Activated CD4-positive, alpha-beta memory T cell treated with anti-CD3 and anti-CD28 coated beads for 36 hours (primary cell): ENCODE measurements at regions of chr1 and their contacts with region 1.

Region 1: GRCh38 chr1:204363335-204364124 is 3.8 kb upstream of the PLEKHA6 start:
- DNase-seq: peak; percentile 88
- H3K4me3 Mint-ChIP-seq: peak overlapping the region; percentile 30
- H3K27ac Mint-ChIP-seq: peak overlapping the region; percentile 59
- H3K4me1 Mint-ChIP-seq: peaks cover 26% of the 10 kb centered on the region
- H3K27me3 Mint-ChIP-seq: peaks cover 9% of the 10 kb centered on the region

Region 2: DNA sequence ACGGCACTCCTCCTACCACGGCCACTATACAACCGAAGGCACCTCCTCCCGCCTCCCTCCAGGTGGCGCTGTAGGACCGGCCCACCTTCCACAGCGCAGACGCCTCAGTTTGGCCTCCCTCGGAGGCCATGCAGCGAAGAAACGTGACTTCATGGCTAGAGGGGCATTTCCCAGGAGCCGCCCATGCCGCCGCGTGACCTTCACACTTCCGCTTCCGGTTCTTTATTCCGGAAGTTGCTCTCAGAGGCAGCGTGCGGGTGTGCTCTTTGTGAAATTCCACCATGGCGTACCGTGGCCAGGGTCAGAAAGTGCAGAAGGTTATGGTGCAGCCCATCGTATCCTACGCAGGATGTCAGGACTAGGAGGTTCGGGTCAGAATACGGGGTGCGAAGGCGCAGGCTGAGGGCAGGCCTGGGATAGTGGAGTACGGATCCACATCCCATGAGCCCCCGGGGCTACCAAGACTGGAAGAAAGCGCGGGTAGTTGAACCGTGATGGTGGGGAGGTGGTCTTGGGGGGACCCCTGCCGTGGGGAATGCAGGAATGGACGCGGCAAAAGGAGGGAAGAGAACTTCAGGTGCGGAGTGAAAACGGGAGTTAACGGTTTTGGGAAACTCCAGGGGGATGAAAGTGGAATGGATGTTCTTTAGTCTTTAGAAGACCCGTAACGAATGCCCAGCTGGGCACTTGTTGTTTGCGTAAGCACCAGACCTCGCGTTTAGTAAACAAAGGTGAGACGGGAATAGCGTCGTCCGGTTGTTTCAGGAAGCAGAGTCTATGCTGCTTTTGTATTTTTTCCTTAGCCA is 501.9 kb before region 1 on chr1 and contains the start of gene SNRPE:
- CTCF ChIA-PET with region 1: no interaction called
- POLR2A ChIA-PET with region 1: no interaction called
- intact Hi-C with region 1: loop called (anchors 1 kb)
- DNase-seq: peak; percentile 98
- H3K4me3 Mint-ChIP-seq: peak within 1 kb of the TSS; percentile 93
- H3K27ac Mint-ChIP-seq: peak within 1 kb of the TSS; percentile 90
- H3K4me1 Mint-ChIP-seq: peaks cover 10% of the 10 kb centered on the region
- H3K27me3 Mint-ChIP-seq: no peaks in the 10 kb centered on the region
- total RNA-seq, gene SNRPE: 327 to 339 TPM

Region 3: GRCh38 chr1:204136814-204137213 is 226.7 kb before region 1 on chr1:
- CTCF ChIA-PET with region 1: no interaction called
- POLR2A ChIA-PET with region 1: no interaction called
- intact Hi-C with region 1: no loop called
- DNase-seq: no peak
- H3K4me3 Mint-ChIP-seq: no peak overlapping the region
- H3K27ac Mint-ChIP-seq: no peak overlapping the region
- H3K4me1 Mint-ChIP-seq: no peaks in the 10 kb centered on the region
- H3K27me3 Mint-ChIP-seq: no peaks in the 10 kb centered on the region

Region 4: GRCh38 chr1:204190212-204191211 is 173.0 kb before region 1 on chr1:
- CTCF ChIA-PET with region 1: interaction called, 13 read pairs
- POLR2A ChIA-PET with region 1: no interaction called
- intact Hi-C with region 1: no loop called
- DNase-seq: peak; percentile 36
- H3K4me3 Mint-ChIP-seq: no peak overlapping the region
- H3K27ac Mint-ChIP-seq: no peak overlapping the region
- H3K4me1 Mint-ChIP-seq: peaks cover 13% of the 10 kb centered on the region
- H3K27me3 Mint-ChIP-seq: peaks cover 44% of the 10 kb centered on the region

Region 5: GRCh38 chr1:204213668-204214662 is 149.6 kb before region 1 on chr1 and contains the start of gene GOLT1A:
- CTCF ChIA-PET with region 1: interaction called, 20 read pairs
- POLR2A ChIA-PET with region 1: no interaction called
- intact Hi-C with region 1: no loop called
- DNase-seq: peak; percentile 68
- H3K4me3 Mint-ChIP-seq: peak within 1 kb of the TSS; percentile 40
- H3K27ac Mint-ChIP-seq: no peak within 1 kb of the TSS
- H3K4me1 Mint-ChIP-seq: peaks cover 3% of the 10 kb centered on the region
- H3K27me3 Mint-ChIP-seq: peaks cover 4% of the 10 kb centered on the region
- total RNA-seq, gene GOLT1A: 0.27 TPM in 1 of 2 experiments, not detected in the other

Region 6: GRCh38 chr1:204304067-204304466 is 59.5 kb before region 1 on chr1:
- CTCF ChIA-PET with region 1: interaction called, 7 read pairs
- POLR2A ChIA-PET with region 1: no interaction called
- intact Hi-C with region 1: loop called (anchors 5 kb)
- DNase-seq: no peak
- H3K4me3 Mint-ChIP-seq: no peak overlapping the region
- H3K27ac Mint-ChIP-seq: no peak overlapping the region
- H3K4me1 Mint-ChIP-seq: no peaks in the 10 kb centered on the region
- H3K27me3 Mint-ChIP-seq: peaks cover 10% of the 10 kb centered on the region

Region 7: DNA sequence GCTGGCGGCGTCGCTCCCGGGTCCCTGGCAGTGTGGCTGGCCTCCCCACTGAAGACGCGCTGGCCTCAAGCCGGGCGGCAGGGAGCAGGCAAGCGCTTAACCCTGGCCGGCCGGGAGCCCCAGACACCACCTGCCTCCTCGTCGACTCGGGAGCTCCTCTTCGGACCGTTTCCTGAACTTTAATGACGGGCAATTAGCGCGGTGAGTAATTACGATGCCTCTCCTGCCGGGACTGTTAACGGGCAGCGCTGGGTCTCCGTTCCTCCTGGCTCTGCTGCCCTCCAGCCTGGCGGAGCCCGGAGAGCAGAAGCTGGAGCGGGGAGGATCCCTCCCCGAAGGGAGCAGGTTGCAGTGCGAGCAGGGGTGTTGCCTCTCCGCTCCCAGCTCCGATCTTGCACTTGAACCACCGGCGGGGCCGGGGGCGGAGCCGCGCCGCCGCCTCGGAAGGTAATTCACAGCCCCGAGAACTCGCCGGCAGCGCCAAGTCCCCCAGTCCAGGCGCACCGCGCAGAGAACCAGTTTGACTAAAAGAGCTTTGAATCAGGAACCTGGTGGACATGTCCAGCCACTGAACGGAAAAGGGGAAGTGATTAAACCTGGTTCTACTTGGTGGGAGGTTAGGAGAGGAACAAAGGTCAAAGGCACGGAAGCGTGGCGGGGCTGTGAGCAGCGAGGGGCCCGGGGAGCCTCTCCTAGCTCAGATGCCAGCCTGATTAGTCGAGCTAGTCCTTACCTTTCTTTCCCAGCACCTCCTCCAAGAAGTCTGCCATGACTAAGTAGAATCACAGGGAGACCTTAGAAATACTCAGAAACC is 14.5 kb after region 1 on chr1:
- CTCF ChIA-PET with region 1: interaction called, 16 read pairs
- POLR2A ChIA-PET with region 1: no interaction called
- intact Hi-C with region 1: loop called (anchors 1 kb)
- DNase-seq: peak; percentile 58
- H3K4me3 Mint-ChIP-seq: peak overlapping the region; percentile 79
- H3K27ac Mint-ChIP-seq: no peak overlapping the region
- H3K4me1 Mint-ChIP-seq: peaks cover 13% of the 10 kb centered on the region
- H3K27me3 Mint-ChIP-seq: peaks cover 16% of the 10 kb centered on the region

Region 8: DNA sequence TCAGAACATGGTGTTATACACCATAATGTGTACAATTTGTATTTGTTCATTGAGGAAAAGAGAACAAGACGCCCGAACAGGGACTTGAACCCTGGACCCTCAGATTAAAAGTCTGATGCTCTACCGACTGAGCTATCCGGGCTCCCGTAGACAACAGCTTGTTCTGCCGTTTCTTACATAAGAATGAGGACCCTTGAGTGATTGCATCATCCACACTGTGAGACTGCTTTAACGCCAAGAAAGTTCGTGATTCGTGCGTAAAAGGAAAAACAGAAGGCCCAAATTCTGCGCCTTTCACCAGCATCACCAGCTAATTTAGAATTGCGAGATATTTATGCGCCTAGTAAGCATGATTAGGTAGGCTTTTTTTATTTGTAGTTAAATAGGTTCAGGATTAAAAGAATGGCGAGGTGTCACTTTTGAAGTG is 143.4 kb after region 1 on chr1:
- CTCF ChIA-PET with region 1: interaction called, 4 read pairs
- POLR2A ChIA-PET with region 1: no interaction called
- intact Hi-C with region 1: loop called (anchors 5 kb)
- DNase-seq: peak; percentile 93
- H3K4me3 Mint-ChIP-seq: peak overlapping the region; percentile 91
- H3K27ac Mint-ChIP-seq: peak overlapping the region; percentile 98
- H3K4me1 Mint-ChIP-seq: peaks cover 24% of the 10 kb centered on the region
- H3K27me3 Mint-ChIP-seq: peaks cover 4% of the 10 kb centered on the region